HEK293 (cell line): ENCODE measurements at regions of chr16 and their contacts with region 1.

Region 1: DNA sequence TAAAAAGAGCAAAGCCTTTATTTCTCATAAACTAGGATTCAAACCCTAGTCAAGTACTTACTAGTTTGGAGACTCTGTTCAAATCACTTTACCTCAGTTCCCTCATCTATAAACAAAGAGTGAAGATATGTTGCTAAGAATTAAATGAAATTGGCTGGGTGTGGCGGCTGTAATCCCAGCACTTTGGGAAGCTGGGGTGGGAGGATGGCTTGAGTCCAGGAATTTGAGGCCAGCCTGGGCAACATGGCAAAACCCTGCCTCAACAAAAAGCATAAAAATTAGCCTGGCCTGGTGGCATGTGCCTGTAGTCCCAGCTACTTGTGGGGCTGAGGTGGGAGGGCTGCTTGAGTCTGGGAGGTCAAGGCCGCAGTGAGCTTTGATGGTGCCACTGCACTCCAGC is 114.5 kb upstream of the CREBBP start:
- H3K4me3 ChIP-seq: no peak overlapping the region
- H3K27ac ChIP-seq: no peak overlapping the region
- H3K4me1 ChIP-seq: peaks cover 5% of the 10 kb centered on the region
- CTCF ChIP-seq: no peak

Region 2: DNA sequence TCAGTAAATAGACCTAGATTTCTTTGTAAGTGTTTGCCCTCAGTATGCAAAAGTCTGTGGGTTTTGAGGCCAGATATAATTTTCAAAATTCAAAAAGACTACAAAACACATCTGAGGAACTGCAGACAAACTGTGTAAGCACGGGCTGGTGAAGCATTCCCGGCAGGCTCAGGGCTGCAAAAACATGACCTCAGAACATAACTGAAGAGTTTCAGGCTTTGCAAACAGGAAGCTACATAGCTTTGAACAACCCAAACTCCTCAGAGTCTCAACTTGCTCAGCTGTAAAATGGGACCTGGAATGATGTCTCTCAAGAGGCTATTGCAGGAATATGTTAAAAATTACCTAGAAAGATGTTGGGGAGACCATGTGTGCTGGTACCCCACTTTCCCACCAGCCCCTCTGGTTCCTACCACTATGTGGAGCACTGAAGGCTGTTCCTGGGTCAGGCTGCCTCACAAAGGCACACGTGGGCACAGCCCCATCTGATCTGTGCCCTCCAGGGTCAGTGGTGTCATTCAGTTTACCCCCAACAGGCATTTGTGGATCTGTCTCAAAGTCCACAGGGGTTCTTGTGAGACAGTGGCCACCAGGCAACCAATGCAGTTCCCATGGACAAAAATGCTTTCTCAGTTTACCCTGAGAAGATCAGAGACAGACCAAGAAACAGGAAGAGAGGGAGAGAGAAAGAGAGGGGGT is 187.4 kb before region 1 on chr16:
- CTCF ChIA-PET with region 1: no interaction called
- POLR2A ChIA-PET with region 1: no interaction called
- H3K4me3 ChIP-seq: no peak overlapping the region
- H3K27ac ChIP-seq: no peak overlapping the region
- H3K4me1 ChIP-seq: no peaks in the 10 kb centered on the region
- CTCF ChIP-seq: no peak

Region 3: GRCh38 chr16:3983081-3983520 is 11.9 kb before region 1 on chr16:
- CTCF ChIA-PET with region 1: interaction called, 11 read pairs
- POLR2A ChIA-PET with region 1: no interaction called
- H3K4me3 ChIP-seq: no peak overlapping the region
- H3K27ac ChIP-seq: no peak overlapping the region
- H3K4me1 ChIP-seq: peaks cover 8% of the 10 kb centered on the region
- CTCF ChIP-seq: peak; percentile 86